Right cardiac atrium (tissue), 5 donors: ENCODE measurements at regions of chr5 and their contacts with region 1.

Region 1: DNA sequence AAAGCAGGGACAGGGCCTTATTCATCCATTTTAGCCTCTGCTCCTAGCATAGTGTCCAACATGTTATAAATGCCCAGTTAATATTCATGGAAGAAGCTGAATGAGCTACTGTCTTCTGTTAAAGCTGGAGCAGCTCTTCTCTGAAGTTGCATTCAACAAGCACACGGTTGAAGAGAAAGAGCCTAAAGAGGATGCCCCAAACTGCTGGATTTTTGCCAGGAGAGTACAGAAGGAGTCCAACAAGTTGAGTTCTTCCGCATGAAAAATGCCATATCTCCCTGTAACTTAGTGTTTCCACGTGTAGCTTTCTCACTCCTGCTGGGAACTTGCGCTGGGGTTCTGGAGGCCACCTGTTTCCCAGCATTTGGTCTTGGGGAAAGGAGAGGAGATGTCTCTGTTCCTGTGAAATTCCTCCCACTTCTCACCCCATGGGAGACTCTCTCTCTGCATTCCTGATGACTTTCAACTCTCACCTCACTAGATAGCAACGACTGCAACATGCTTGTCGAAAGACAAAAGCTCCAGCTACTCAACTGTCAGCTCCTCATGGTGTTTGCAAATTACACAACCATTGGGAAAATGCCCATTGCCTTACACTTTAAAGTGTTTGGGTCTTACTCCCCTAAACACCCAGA is 122.8 kb downstream of the KIF4B start:
- DNase-seq: no peak
- ATAC-seq: peak; percentile 49 to 72
- H3K4me3 ChIP-seq: no peak overlapping the region
- H3K27ac ChIP-seq: no peak overlapping the region
- H3K4me1 ChIP-seq: peaks cover 4% of the 10 kb centered on the region
- H3K27me3 ChIP-seq: no peaks in the 10 kb centered on the region

Region 2: DNA sequence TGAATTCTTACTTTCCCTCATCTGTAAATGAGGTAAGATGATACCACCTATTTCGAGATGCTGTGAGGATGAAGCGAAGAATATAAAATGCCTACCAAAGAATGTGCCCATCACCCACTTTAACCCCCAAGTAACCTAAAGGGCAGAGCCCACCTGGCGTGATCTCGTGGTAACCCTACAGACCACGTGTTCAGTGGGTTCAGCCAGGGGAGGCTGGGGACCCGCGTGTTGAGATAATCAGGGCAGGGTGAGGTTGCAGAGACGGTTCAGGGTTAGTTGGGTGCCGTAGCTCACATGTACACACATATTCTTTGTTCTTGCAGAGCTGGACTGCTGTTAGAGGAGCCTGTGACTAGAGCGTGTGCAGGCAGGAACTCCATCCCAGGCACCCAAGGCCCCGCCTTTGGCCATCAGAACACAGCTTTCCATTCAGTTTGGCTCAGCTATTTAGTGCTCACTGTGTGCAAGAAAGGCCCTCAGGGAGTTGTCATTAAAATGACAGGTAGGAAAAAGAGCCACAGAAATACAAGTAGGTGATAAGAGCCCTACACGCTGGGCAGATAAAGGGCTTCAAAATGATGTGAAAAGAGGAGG is 601.8 kb before region 1 on chr5:
- intact Hi-C with region 1: no loop called
- DNase-seq: no peak
- ATAC-seq: no peak
- H3K4me3 ChIP-seq: no peak overlapping the region
- H3K27ac ChIP-seq: no peak overlapping the region
- H3K4me1 ChIP-seq: no peaks in the 10 kb centered on the region
- H3K27me3 ChIP-seq: no peaks in the 10 kb centered on the region

Region 3: DNA sequence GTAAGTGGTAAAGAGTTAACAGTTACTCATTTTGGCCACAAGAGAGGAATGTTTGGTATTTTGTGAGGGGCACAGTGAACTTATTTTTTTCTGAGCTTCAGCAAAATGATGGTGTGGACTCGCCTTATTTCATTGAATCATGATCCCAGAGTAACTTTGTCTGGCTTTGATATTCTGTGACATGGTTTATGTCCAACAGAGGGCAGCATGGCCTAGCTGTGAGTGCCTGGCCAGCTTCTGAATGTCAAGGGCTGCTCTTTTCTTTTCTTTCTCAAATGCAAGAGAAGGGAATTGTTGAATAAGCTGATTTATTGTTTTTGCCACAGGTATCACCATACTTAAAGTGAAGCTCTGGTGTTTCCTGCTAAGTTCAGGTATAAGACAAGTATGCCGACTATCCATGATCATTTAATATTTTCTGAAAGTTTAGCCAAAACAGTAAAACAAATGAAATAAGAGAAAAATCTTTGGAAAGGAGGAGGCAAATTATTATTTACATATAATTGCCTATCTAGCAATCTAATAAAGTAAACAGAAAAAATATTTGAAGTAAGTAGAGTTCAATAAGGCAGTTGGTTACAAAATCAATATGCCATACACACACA is 163.8 kb before region 1 on chr5:
- intact Hi-C with region 1: loop called in 1 of 4 experiments (anchors 5 kb)
- DNase-seq: no peak
- ATAC-seq: peak; percentile 41 to 48
- H3K4me3 ChIP-seq: no peak overlapping the region
- H3K27ac ChIP-seq: no peak overlapping the region
- H3K4me1 ChIP-seq: no peaks in the 10 kb centered on the region
- H3K27me3 ChIP-seq: no peaks in the 10 kb centered on the region

Region 4: GRCh38 chr5:154984946-154985516 is 151.3 kb before region 1 on chr5:
- intact Hi-C with region 1: loop called in 1 of 4 experiments (anchors 5 kb)
- DNase-seq: no peak
- ATAC-seq: no peak
- H3K4me3 ChIP-seq: no peak overlapping the region
- H3K27ac ChIP-seq: no peak overlapping the region
- H3K4me1 ChIP-seq: no peaks in the 10 kb centered on the region
- H3K27me3 ChIP-seq: no peaks in the 10 kb centered on the region

Region 5: DNA sequence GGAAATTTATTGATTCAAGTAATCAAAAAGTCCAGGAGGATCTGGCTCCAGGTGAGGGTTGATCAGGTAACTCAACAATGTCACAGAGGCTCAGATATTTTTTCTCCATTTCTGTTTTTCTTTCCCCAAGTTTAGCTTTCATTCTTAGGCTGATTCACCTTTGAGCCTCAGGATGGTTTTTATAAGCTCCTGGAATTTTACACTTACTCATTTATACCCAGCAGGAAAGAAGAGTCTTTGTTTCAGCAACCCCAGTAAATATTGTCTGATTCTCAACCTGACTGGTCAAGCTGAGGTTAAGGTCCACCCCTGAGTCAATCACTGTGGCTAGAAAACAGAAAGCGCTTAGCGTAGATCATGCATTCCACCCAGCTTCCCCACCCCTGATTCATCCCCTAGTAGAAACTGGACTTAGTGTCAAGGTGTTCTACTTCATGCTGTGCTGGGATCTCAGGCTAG is 377.8 kb after region 1 on chr5:
- intact Hi-C with region 1: no loop called
- DNase-seq: no peak
- ATAC-seq: no peak
- H3K4me3 ChIP-seq: no peak overlapping the region
- H3K27ac ChIP-seq: no peak overlapping the region
- H3K4me1 ChIP-seq: no peaks in the 10 kb centered on the region
- H3K27me3 ChIP-seq: no peaks in the 10 kb centered on the region

Region 6: GRCh38 chr5:155728146-155728856 is 592.0 kb after region 1 on chr5:
- intact Hi-C with region 1: loop called in 1 of 4 experiments (anchors 10 kb)
- DNase-seq: peak; percentile 66 to 84 (median 83)
- ATAC-seq: peak; percentile 80 to 81
- H3K4me3 ChIP-seq: peak overlapping the region; percentile 52
- H3K27ac ChIP-seq: peak overlapping the region; percentile 44
- H3K4me1 ChIP-seq: peaks cover 3% of the 10 kb centered on the region
- H3K27me3 ChIP-seq: no peaks in the 10 kb centered on the region